HEK293T (cell line): ENCODE measurements at regions of chr17 and their contacts with region 1.

Region 1: DNA sequence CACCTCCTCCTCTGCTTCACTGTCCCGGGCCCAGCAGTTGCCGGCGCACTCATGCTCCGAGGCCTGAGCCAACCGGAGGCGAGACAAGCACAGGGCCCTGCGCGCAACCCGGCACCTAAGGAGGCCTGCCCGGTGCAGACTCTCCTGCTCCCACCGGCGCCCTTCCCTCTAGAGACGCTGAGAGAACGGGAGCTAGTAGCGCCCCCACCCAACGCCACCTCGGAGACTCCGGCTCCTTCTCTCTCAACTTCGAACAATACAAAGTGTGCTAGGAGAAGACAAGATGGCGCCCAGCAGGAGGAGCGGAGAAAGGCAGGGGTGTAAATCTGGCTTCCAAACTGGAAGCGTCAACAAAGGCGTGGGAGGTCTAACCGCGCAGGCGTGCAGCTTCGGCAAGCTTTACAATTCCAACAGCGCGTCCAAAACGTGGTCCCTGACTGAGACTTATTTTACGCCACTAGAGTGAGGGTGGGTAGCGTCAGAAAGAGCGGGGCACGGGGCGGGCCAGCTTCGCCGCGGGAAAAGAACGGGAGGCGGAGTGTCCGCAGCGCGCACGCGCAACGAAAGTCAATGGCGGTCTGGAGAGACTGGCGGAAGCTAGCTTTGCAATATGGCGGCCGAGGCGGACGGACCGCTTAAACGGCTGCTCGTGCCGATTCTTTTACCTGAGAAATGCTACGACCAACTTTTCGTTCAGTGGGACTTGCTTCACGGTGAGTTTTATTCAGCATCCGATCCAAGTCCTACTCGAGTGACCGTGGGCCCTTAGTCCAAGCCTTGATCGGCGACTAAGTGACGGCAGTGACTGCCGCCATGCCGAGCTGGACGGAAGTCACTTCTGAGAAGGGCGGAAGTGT is at the start of gene MPDU1:
- DNase-seq: peak; percentile 90

Region 2: GRCh38 chr17:7561028-7561575 is 22.4 kb before region 1 on chr17:
- CTCF ChIA-PET with region 1: interaction called, 3 read pairs
- POLR2A ChIA-PET with region 1: interaction called, 22 read pairs
- DNase-seq: peak; percentile 87

Region 3: DNA sequence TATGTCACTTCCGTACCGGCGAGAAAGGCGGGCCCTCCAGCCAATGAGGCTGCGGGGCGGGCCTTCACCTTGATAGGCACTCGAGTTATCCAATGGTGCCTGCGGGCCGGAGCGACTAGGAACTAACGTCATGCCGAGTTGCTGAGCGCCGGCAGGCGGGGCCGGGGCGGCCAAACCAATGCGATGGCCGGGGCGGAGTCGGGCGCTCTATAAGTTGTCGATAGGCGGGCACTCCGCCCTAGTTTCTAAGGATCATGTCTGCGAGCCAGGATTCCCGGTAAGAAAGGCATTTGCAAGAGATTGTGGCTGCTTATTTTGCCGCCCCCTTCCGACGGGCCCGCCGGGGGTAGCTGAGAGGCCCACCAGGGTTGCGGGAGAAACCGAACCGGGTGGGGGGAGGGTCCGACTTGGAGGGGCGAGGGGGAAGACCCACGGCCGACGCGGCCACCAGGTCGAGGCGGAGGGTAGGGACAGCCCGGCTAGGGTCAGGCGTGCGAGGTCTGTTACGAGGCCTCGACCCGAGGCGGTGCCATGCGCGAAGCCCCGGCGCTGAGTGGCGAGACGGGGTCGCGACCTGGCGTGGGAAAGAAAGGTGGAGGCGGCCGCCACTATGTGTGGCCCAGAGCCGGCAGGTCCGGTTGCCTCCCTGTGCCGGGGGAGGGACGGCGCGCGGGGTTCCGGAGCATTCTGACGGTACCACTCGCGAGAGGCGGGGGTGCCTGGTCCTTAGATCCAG is 10.7 kb before region 1 on chr17:
- CTCF ChIA-PET with region 1: no interaction called
- POLR2A ChIA-PET with region 1: interaction called, 40 read pairs
- DNase-seq: peak; percentile 98

Region 4: GRCh38 chr17:7614422-7615264 is 31.2 kb after region 1 on chr17 and contains the start of gene FXR2:
- CTCF ChIA-PET with region 1: interaction called, 5 read pairs
- POLR2A ChIA-PET with region 1: interaction called, 32 read pairs
- DNase-seq: peak; percentile 99

Region 5: DNA sequence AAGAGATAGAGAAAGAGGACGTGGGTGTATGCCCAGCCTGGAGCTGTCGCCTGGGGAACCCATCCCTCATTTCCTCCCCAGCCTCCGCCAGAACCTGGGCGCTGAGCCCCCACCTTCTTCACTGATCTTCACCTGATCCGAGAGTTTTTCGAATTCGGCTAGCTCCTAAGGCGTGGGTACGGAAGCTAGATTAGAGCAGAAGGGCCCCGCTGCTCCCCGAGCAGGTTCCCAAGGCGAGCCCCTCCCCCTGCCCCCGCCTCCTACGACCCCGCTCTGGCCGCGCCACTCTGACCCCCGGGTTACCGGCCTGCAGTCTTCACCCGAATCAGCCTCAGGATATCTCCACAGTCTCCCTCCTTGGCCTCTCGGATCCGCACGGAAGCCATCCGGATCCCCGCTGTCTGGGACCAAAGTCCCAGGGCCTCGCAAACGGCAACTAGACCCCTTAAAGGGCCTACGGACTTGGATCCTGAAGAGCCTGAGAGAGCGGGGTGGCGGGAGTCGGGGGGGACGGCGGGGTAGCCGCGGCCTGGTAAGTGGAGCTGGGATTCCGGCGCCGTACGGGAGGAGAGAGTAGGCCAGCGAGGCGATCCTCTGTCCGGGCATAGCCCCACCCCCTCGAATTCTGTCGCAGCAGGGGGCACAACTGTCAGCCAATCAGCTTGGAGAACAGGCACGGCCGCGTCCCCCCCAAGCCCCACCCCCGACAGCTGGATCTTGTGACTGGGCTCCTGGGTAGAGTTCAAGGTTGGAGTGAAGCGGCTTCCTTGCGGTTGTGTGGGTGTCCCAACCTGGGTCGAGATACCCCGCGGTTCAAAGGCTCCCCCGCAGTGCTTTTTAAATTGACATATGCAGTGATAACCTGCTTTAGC is 44.0 kb after region 1 on chr17 and contains the start of gene SAT2:
- CTCF ChIA-PET with region 1: no interaction called
- POLR2A ChIA-PET with region 1: interaction called, 16 read pairs
- DNase-seq: peak; percentile 96

Region 6: GRCh38 chr17:7767405-7768021 is 184.0 kb after region 1 on chr17:
- CTCF ChIA-PET with region 1: no interaction called
- POLR2A ChIA-PET with region 1: no interaction called
- DNase-seq: no peak